CD8-positive, alpha-beta T cell (primary cell): ENCODE measurements at regions of chr9 and their contacts with region 1.

Region 1: GRCh38 chr9:92325269-92325990 is at the starts of genes CENPP and NOL8:
- DNase-seq: peak; percentile 70 to 93 (median 83)
- ATAC-seq: peak; percentile 92
- H3K4me3 ChIP-seq: peak within 1 kb of the TSS; percentile 81 to 84
- H3K4me3 Mint-ChIP-seq: peak within 1 kb of the TSS; percentile 99
- H3K27ac ChIP-seq: peak within 1 kb of the TSS; percentile 82 to 97
- H3K27ac Mint-ChIP-seq: peak within 1 kb of the TSS; percentile 99
- H3K4me1 ChIP-seq: peaks cover 18% of the 10 kb centered on the region
- H3K4me1 Mint-ChIP-seq: peaks cover 38% of the 10 kb centered on the region
- H3K27me3 ChIP-seq: no peaks in the 10 kb centered on the region
- H3K27me3 Mint-ChIP-seq: no peaks in the 10 kb centered on the region
- CTCF ChIP-seq: no peak
- total RNA-seq, gene CENPP: 2.8 to 4.6 TPM
- total RNA-seq, gene NOL8: 63.2 to 69.0 TPM

Region 2: GRCh38 chr9:92247296-92247695 is 78.1 kb before region 1 on chr9:
- CTCF ChIA-PET with region 1: no interaction called
- POLR2A ChIA-PET with region 1: no interaction called
- intact Hi-C with region 1: no loop called
- DNase-seq: no peak
- ATAC-seq: no peak
- H3K4me3 ChIP-seq: no peak overlapping the region
- H3K4me3 Mint-ChIP-seq: no peak overlapping the region
- H3K27ac ChIP-seq: no peak overlapping the region
- H3K27ac Mint-ChIP-seq: no peak overlapping the region
- H3K4me1 ChIP-seq: no peaks in the 10 kb centered on the region
- H3K4me1 Mint-ChIP-seq: no peaks in the 10 kb centered on the region
- H3K27me3 ChIP-seq: no peaks in the 10 kb centered on the region
- H3K27me3 Mint-ChIP-seq: no peaks in the 10 kb centered on the region
- CTCF ChIP-seq: no peak

Region 3: DNA sequence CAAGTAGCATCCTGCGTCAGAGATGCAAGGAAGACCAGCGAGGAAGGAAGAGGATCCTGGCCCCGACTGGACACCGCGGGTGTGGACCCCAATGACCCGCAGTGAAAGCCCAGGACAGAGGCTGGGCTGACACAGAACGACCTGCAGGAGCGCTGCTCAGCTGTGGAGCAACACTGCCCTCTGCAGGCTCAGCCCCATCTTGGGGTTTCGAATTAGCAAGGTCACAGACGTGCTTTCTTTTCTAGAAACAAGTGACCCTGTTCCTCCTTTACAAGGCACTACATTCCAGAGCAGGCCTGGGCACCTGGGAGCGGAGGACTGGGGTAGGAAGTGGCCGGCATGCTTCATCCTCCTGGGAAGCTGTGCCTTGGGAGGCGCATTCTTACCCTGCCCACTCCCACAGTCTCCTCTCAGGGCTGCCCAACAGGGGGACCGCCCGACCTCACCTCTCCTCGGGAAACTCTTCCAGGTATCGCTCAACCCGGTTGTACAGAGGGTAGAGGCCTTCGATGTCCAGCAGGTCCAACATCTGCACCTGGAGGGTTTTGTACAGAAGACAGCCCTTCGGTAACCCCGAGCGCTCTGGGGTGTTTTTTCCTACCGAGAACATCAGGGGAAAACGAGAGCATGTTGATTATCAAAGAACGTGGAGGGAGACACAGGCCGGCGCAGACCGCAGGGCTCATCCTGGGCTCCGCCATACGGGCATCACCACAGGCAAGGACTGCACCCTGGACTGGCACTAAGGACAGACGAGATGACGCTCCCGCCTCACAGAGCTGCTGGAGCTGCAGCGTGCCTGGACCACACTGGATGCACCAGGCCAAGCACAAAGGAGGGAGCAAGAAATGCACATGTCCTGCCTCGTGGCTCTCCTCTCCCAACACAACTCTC is 309.5 kb after region 1 on chr9:
- CTCF ChIA-PET with region 1: interaction called, 3 read pairs
- POLR2A ChIA-PET with region 1: no interaction called
- intact Hi-C with region 1: loop called in 1 of 2 experiments (anchors 10 kb)
- DNase-seq: peak; percentile 31 to 71 (median 54)
- ATAC-seq: peak; percentile 71
- H3K4me3 ChIP-seq: no peak overlapping the region
- H3K4me3 Mint-ChIP-seq: no peak overlapping the region
- H3K27ac ChIP-seq: no peak overlapping the region
- H3K27ac Mint-ChIP-seq: no peak overlapping the region
- H3K4me1 ChIP-seq: no peaks in the 10 kb centered on the region
- H3K4me1 Mint-ChIP-seq: peaks cover 2% of the 10 kb centered on the region
- H3K27me3 ChIP-seq: no peaks in the 10 kb centered on the region
- H3K27me3 Mint-ChIP-seq: no peaks in the 10 kb centered on the region
- CTCF ChIP-seq: peak; percentile 61

Region 4: GRCh38 chr9:92669890-92670708 is 344.7 kb after region 1 on chr9 and contains the start of gene IPPK:
- CTCF ChIA-PET with region 1: no interaction called
- POLR2A ChIA-PET with region 1: interaction called, 3 read pairs
- intact Hi-C with region 1: loop called in 1 of 2 experiments (anchors 1 kb)
- DNase-seq: peak; percentile 93 to 99 (median 96)
- ATAC-seq: peak; percentile 93
- H3K4me3 ChIP-seq: peak within 1 kb of the TSS; percentile 87 to 98
- H3K4me3 Mint-ChIP-seq: peak within 1 kb of the TSS; percentile 96
- H3K27ac ChIP-seq: peak within 1 kb of the TSS; percentile 96
- H3K27ac Mint-ChIP-seq: peak within 1 kb of the TSS; percentile 98
- H3K4me1 ChIP-seq: peaks cover 23% of the 10 kb centered on the region
- H3K4me1 Mint-ChIP-seq: peaks cover 39% of the 10 kb centered on the region
- H3K27me3 ChIP-seq: no peaks in the 10 kb centered on the region
- H3K27me3 Mint-ChIP-seq: no peaks in the 10 kb centered on the region
- CTCF ChIP-seq: no peak
- total RNA-seq, gene IPPK: 12.2 to 12.8 TPM

Region 5: GRCh38 chr9:92877531-92878430 is 552.4 kb after region 1 on chr9 and contains the start of gene ZNF484:
- CTCF ChIA-PET with region 1: no interaction called
- POLR2A ChIA-PET with region 1: no interaction called
- intact Hi-C with region 1: loop called (anchors 10 kb)
- DNase-seq: peak; percentile 91 to 100 (median 98)
- ATAC-seq: peak; percentile 96
- H3K4me3 ChIP-seq: peak within 1 kb of the TSS; percentile 76 to 85
- H3K4me3 Mint-ChIP-seq: peak within 1 kb of the TSS; percentile 100
- H3K27ac ChIP-seq: peak within 1 kb of the TSS; percentile 81 to 90
- H3K27ac Mint-ChIP-seq: peak within 1 kb of the TSS; percentile 100
- H3K4me1 ChIP-seq: peaks cover 19% of the 10 kb centered on the region
- H3K4me1 Mint-ChIP-seq: peaks cover 48% of the 10 kb centered on the region
- H3K27me3 ChIP-seq: no peaks in the 10 kb centered on the region
- H3K27me3 Mint-ChIP-seq: no peaks in the 10 kb centered on the region
- CTCF ChIP-seq: no peak
- total RNA-seq, gene ZNF484: 18.4 to 18.7 TPM

Region 6: GRCh38 chr9:93453047-93453914 is 1127.9 kb after region 1 on chr9 and contains the start of gene FAM120AOS:
- CTCF ChIA-PET with region 1: no interaction called
- POLR2A ChIA-PET with region 1: no interaction called
- intact Hi-C with region 1: loop called in 1 of 2 experiments (anchors 5 kb)
- DNase-seq: peak; percentile 59 to 95 (median 85)
- ATAC-seq: peak; percentile 74
- H3K4me3 ChIP-seq: peak within 1 kb of the TSS; percentile 63 to 88
- H3K4me3 Mint-ChIP-seq: peak within 1 kb of the TSS; percentile 90
- H3K27ac ChIP-seq: peak within 1 kb of the TSS; percentile 49 to 68
- H3K27ac Mint-ChIP-seq: peak within 1 kb of the TSS; percentile 95
- H3K4me1 ChIP-seq: peaks cover 27% of the 10 kb centered on the region
- H3K4me1 Mint-ChIP-seq: peaks cover 60% of the 10 kb centered on the region
- H3K27me3 ChIP-seq: no peaks in the 10 kb centered on the region
- H3K27me3 Mint-ChIP-seq: no peaks in the 10 kb centered on the region
- CTCF ChIP-seq: no peak
- total RNA-seq, gene FAM120AOS: 40.3 to 40.7 TPM